ENCODE measurements at regions of chr9 and their contacts with region 1.

Region 1: DNA sequence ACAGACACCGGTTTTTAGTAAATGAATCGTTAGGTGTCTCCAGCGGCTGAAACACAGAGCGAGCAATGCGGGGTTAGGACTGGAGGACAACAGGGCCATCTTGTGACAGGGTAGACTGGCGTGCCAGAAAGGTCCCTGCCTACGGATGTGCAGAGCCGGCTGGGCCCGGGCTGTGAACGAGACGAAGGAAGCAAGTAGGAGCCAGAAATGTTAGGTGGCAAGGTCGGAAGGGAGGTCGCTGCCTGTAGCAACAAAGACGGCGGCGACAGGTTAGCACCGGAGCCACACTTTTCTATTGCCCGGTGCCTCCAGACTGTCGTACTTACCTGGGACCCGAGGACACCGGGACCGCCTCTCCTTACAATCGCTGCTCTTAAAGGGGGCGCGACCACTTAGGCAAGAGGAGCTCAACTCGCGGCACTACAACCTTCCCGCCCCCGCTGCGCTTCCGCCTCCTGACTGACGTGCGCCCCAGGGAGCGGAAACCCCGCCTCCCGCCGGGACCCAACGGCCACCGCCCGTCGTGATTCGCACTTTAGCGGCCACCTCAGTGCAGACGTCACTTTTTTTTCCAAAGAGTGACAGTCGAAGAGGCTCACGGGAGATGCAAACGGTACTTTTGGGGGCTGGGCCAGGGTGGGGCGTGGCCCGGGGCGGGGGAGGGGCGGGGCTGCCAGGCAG is at the start of gene INIP:
- DNase-seq: peak; percentile 96
- ATAC-seq: peak; percentile 90
- H3K4me3 ChIP-seq: peak within 1 kb of the TSS; percentile 70 to 75
- H3K27ac ChIP-seq: peak within 1 kb of the TSS; percentile 55
- H3K4me1 ChIP-seq: peaks cover 2 to 10% of the 10 kb centered on the region in 2 experiments; a peak in 2 of 4 replicates
- H3K27me3 ChIP-seq: no peaks in the 10 kb centered on the region
- CTCF ChIP-seq: no peak
- POLR2A ChIP-seq: peak; percentile 33
- RAD21 ChIP-seq: no peak; the same call in 1 of the 2 replicates
- total RNA-seq, gene INIP: 28.9 TPM

Region 2: GRCh38 chr9:112486221-112487007 is 231.4 kb before region 1 on chr9 and contains the start of gene KIAA1958:
- CTCF ChIA-PET with region 1: no interaction called
- POLR2A ChIA-PET with region 1: interaction called, 4 read pairs
- RAD21 ChIA-PET with region 1: no interaction called
- intact Hi-C with region 1: loop called (anchors 10 kb)
- DNase-seq: peak; percentile 63
- ATAC-seq: peak; percentile 90
- H3K4me3 ChIP-seq: peak within 1 kb of the TSS; percentile 76 to 78
- H3K27ac ChIP-seq: peak within 1 kb of the TSS; percentile 81
- H3K4me1 ChIP-seq: peaks cover 5 to 13% of the 10 kb centered on the region in 2 experiments
- H3K27me3 ChIP-seq: no peaks in the 10 kb centered on the region
- CTCF ChIP-seq: no peak
- POLR2A ChIP-seq: peak; percentile 88
- RAD21 ChIP-seq: no peak
- total RNA-seq, gene KIAA1958: 18.5 TPM

Region 3: GRCh38 chr9:112618385-112619009 is 99.3 kb before region 1 on chr9:
- CTCF ChIA-PET with region 1: no interaction called
- POLR2A ChIA-PET with region 1: no interaction called
- RAD21 ChIA-PET with region 1: no interaction called
- intact Hi-C with region 1: no loop called
- DNase-seq: no peak
- ATAC-seq: no peak
- H3K4me3 ChIP-seq: no peak overlapping the region
- H3K27ac ChIP-seq: no peak overlapping the region
- H3K4me1 ChIP-seq: no peaks in the 10 kb centered on the region
- H3K27me3 ChIP-seq: no peaks in the 10 kb centered on the region
- CTCF ChIP-seq: no peak
- POLR2A ChIP-seq: no peak
- RAD21 ChIP-seq: no peak

Region 4: GRCh38 chr9:112629671-112630485 is 87.9 kb before region 1 on chr9:
- CTCF ChIA-PET with region 1: no interaction called
- POLR2A ChIA-PET with region 1: no interaction called
- RAD21 ChIA-PET with region 1: no interaction called
- intact Hi-C with region 1: no loop called
- DNase-seq: no peak
- ATAC-seq: no peak
- H3K4me3 ChIP-seq: no peak overlapping the region
- H3K27ac ChIP-seq: no peak overlapping the region
- H3K4me1 ChIP-seq: no peaks in the 10 kb centered on the region
- H3K27me3 ChIP-seq: no peaks in the 10 kb centered on the region
- CTCF ChIP-seq: no peak
- POLR2A ChIP-seq: no peak
- RAD21 ChIP-seq: no peak

Region 5: GRCh38 chr9:112750111-112750767 is 32.4 kb after region 1 on chr9 and contains the start of gene SNX30:
- CTCF ChIA-PET with region 1: no interaction called
- POLR2A ChIA-PET with region 1: interaction called, 11 read pairs
- RAD21 ChIA-PET with region 1: no interaction called
- intact Hi-C with region 1: loop called (anchors 2 kb)
- DNase-seq: peak; percentile 62
- ATAC-seq: peak; percentile 83
- H3K4me3 ChIP-seq: peak within 1 kb of the TSS; percentile 72 to 88
- H3K27ac ChIP-seq: peak within 1 kb of the TSS; percentile 65
- H3K4me1 ChIP-seq: peaks cover 22 to 51% of the 10 kb centered on the region in 2 experiments
- H3K27me3 ChIP-seq: no peaks in the 10 kb centered on the region
- CTCF ChIP-seq: no peak
- POLR2A ChIP-seq: peak; percentile 98
- RAD21 ChIP-seq: 0 out of 2 replicates have a peak, but pooled peaks have one; percentile 12
- total RNA-seq, gene SNX30: 12.7 TPM

Measured in HCT116 (cell line).